ENCODE measurements at regions of chr5 and their contacts with region 1.

Region 1: DNA sequence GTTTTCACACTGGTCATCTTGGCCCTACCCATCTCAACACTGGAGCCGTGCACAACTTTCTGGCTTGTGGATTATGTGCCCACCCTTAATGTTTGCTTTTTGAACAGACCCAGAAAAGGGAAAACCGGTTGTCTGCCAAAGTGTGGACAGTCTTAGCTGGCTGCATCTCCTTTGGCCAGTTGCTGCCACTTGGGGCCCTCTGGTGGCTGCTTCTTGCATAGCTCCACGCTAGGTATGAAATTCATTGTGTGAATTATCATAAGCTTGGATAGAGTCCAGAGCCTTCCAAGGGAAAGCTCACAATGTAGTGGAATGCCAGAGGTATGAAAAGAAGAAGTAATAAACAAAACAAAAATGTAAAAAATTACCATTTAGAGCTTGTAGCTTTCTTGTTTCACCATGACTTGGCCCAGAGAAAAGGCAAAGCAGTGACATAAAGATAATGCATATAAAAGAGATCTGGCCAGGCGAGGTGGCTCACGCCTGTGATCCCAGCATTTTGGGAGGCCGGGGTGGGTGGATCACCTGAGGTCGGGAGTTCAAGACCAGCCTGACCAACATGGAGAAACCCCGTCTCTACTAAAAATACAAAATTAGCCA is 12.5 kb upstream of the SLC36A3 start:
- DNase-seq: peak; percentile 79
- ATAC-seq: peak; percentile 75
- H3K4me3 Mint-ChIP-seq: no peak overlapping the region
- H3K27ac Mint-ChIP-seq: no peak overlapping the region
- H3K4me1 Mint-ChIP-seq: no peaks in the 10 kb centered on the region
- H3K27me3 Mint-ChIP-seq: peaks cover 2% of the 10 kb centered on the region
- CTCF ChIP-seq: peak; percentile 88

Region 2: GRCh38 chr5:151252762-151253604 is 63.1 kb before region 1 on chr5 and contains the start of gene GM2A:
- CTCF ChIA-PET with region 1: interaction called, 10 read pairs
- POLR2A ChIA-PET with region 1: no interaction called
- intact Hi-C with region 1: no loop called
- DNase-seq: peak; percentile 100
- ATAC-seq: peak; percentile 92
- H3K4me3 Mint-ChIP-seq: peak within 1 kb of the TSS; percentile 90
- H3K27ac Mint-ChIP-seq: peak within 1 kb of the TSS; percentile 95
- H3K4me1 Mint-ChIP-seq: peaks cover 39% of the 10 kb centered on the region
- H3K27me3 Mint-ChIP-seq: no peaks in the 10 kb centered on the region
- CTCF ChIP-seq: no peak
- total RNA-seq, gene GM2A: 13.3 to 13.7 TPM

Region 3: GRCh38 chr5:151264113-151264512 is 52.0 kb before region 1 on chr5:
- CTCF ChIA-PET with region 1: no interaction called
- POLR2A ChIA-PET with region 1: no interaction called
- intact Hi-C with region 1: no loop called
- DNase-seq: peak; percentile 32
- ATAC-seq: peak; percentile 91
- H3K4me3 Mint-ChIP-seq: no peak overlapping the region
- H3K27ac Mint-ChIP-seq: peak overlapping the region; percentile 47
- H3K4me1 Mint-ChIP-seq: peaks cover 8% of the 10 kb centered on the region
- H3K27me3 Mint-ChIP-seq: no peaks in the 10 kb centered on the region
- CTCF ChIP-seq: no peak

Region 4: DNA sequence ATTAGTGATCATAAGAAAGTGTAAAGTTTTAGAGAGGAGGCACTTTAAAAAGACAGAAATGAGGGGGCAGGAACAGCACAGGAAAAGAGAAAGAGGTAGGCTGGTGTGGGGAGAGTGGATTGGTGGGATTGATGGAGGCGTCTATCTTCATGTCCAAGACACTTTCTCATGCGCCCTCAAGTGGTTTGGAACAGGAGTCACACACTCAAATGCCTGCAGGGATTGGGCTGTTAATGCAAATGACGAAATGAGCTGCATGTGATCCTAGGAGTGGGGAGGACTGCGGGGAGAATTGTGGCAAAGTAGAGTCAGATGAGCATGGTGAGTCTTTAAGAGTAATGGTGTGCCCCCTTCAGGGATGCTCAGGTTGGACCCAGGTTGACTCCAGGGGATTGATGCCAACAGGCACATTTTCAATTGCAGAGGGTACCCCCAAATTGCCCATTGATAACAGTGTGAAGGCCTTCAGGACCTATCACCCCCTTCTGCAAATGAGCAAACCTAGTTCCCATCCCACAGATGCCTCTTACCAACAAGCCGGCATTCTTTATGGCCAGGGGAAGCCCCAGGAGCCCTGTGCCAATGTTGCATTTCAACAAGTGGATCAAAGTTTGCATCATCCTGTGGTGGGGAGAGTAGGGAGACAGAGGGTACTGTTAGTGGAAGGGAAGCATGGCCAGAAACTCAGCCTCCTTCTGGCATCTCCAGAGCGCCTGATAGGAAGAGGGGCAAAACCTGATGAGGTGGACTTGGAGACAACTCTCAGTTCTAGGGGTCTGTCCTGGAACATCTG is 17.8 kb before region 1 on chr5:
- CTCF ChIA-PET with region 1: no interaction called
- POLR2A ChIA-PET with region 1: no interaction called
- intact Hi-C with region 1: no loop called
- DNase-seq: no peak
- ATAC-seq: no peak
- H3K4me3 Mint-ChIP-seq: no peak overlapping the region
- H3K27ac Mint-ChIP-seq: no peak overlapping the region
- H3K4me1 Mint-ChIP-seq: no peaks in the 10 kb centered on the region
- H3K27me3 Mint-ChIP-seq: peaks cover 4% of the 10 kb centered on the region
- CTCF ChIP-seq: no peak

Region 5: GRCh38 chr5:151406322-151406947 is 90.3 kb after region 1 on chr5:
- CTCF ChIA-PET with region 1: no interaction called
- POLR2A ChIA-PET with region 1: no interaction called
- intact Hi-C with region 1: no loop called
- DNase-seq: no peak
- ATAC-seq: no peak
- H3K4me3 Mint-ChIP-seq: no peak overlapping the region
- H3K27ac Mint-ChIP-seq: no peak overlapping the region
- H3K4me1 Mint-ChIP-seq: no peaks in the 10 kb centered on the region
- H3K27me3 Mint-ChIP-seq: peaks cover 28% of the 10 kb centered on the region
- CTCF ChIP-seq: peak; percentile 17